ENCODE measurements at regions of chr11 and their contacts with region 1.

Region 1: DNA sequence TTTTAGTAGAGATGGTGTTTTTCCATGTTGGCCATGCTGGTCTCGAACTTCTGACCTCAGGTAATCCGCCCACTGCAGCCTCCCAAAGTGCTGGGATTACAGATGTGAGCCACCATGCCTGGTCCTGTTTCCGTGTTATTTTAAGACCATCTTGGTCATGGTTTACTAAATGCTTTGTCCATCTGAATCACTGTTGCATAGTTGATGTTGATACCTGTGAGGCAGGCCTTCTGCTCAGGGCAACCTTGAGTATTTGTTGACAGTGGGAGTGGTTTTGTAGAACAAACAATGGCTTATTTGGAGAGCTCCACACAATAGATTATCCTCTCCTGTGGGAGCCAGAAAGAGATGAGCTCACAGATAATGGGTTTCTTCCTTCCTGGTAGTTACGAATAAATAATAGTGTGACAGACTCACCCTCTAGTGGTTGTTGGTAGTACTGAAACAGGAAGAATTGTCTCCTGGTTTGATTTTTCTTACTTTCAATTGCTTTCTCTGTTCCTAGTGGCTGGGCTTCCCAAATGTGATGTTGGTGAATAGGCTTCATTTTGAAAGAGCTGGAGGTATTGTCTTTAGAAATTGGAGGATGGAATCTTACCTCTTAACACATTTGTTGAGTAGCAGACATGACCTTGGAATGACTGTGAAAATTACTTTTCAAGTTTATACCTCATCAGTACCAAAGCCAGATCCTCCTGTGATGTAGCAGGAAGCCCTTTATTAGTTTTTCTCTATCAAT is 39.0 kb downstream of the CTNND1 start:
- DNase-seq: no peak
- H3K4me3 ChIP-seq: peak overlapping the region in 8 of 59 donors; percentile 1 to 30 (median 13)
- H3K27ac ChIP-seq: peak overlapping the region in 58 of 59 donors; percentile 3 to 91 (median 78)
- H3K27me3 ChIP-seq: no peaks in the 10 kb centered on the region
- CTCF ChIP-seq: peak; percentile 81 to 99 (median 94)

Region 2: GRCh38 chr11:57456960-57457642 is 343.5 kb before region 1 on chr11:
- intact Hi-C with region 1: loop called in 1 of 2 experiments (anchors 10 kb)
- DNase-seq: peak; percentile 82 to 93 (median 90)
- H3K4me3 ChIP-seq: peak overlapping the region in 13 of 59 donors; percentile 7 to 69 (median 21)
- H3K27ac ChIP-seq: no peak overlapping the region
- H3K27me3 ChIP-seq: peaks cover 0 to 43% (median 13%) of the 10 kb centered on the region in 45 donors
- CTCF ChIP-seq: peak; percentile 90 to 99 (median 98)

Region 3: DNA sequence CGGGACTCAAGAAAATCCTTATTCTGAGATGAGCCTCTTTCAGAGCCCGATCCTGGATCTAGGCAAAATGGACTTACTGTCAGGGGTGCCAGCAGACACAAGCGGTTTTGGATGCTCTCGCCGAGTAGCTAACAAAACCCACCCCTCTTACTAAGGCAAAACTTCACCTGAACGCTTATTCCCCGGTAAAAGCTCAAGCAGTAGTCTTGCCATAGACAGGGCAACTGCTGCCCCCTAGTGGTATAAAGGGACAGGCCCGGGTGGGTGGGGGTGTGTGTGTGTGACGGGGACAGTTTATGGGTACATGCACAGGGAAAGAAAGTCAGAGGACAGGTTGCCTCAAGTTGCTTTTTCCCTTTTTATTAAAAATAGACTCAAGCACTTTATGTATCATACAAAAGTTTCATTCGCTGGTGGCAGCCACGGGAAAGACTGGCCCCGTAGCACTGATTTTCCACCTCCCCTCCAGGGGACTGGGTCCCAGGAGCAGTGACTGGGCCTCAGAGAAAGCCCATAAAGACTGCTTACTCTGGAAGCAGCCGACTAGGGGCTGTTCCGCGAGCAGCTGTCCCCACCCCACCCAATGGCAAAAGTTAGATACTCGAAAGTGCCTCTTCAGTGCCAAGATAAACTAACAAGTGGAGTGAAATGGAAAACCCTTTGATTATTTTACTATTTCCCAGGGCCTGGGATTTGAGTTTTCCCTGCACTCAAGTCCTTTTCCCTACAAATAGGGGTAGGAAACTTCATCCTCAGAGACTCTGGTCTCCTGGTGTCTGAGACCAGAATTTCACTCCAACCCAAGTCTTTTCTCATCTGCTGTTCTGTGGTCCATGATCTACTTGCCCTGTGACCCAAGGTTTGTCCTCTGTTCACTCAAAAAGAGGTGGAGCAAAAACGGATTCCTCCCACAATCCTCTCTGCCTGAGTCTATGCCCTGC is 155.6 kb before region 1 on chr11:
- intact Hi-C with region 1: loop called in 1 of 2 experiments (anchors 5 kb)
- DNase-seq: peak; percentile 67 to 91 (median 84)
- H3K4me3 ChIP-seq: peak overlapping the region in 9 of 59 donors; percentile 7 to 31 (median 13)
- H3K27ac ChIP-seq: peak overlapping the region in 38 of 59 donors; percentile 1 to 95 (median 50)
- H3K27me3 ChIP-seq: peaks cover 0 to 6% (median 0%) of the 10 kb centered on the region in 45 donors
- CTCF ChIP-seq: peak; percentile 65 to 94 (median 84)

Region 4: GRCh38 chr11:57712256-57713150 is 88.1 kb before region 1 on chr11 and contains the start of gene TMX2:
- intact Hi-C with region 1: loop called (anchors 2 kb)
- DNase-seq: peak; percentile 85 to 97 (median 94)
- H3K4me3 ChIP-seq: peak within 1 kb of the TSS; percentile 75 to 100 (median 98)
- H3K27ac ChIP-seq: peak within 1 kb of the TSS; percentile 51 to 96 (median 88)
- H3K27me3 ChIP-seq: no peaks in the 10 kb centered on the region
- CTCF ChIP-seq: peak in 15 of 56 donors; percentile 2 to 46 (median 13)
- total RNA-seq, gene TMX2: 68.4 to 114 (median 91.6) TPM

Region 5: GRCh38 chr11:57761301-57762234 is 39.0 kb before region 1 on chr11 and contains the start of gene CTNND1:
- intact Hi-C with region 1: loop called (anchors 5 kb)
- DNase-seq: peak; percentile 43 to 90 (median 80)
- H3K4me3 ChIP-seq: peak within 1 kb of the TSS; percentile 49 to 93 (median 77)
- H3K27ac ChIP-seq: peak within 1 kb of the TSS; percentile 58 to 97 (median 91)
- H3K27me3 ChIP-seq: no peaks in the 10 kb centered on the region
- CTCF ChIP-seq: peak in 14 of 56 donors; percentile 2 to 37 (median 16)
- total RNA-seq, gene CTNND1: 92.0 to 159 (median 119) TPM

Region 6: GRCh38 chr11:57913715-57914704 is 113.4 kb after region 1 on chr11:
- intact Hi-C with region 1: no loop called
- DNase-seq: no peak
- H3K4me3 ChIP-seq: no peak overlapping the region
- H3K27ac ChIP-seq: no peak overlapping the region
- H3K27me3 ChIP-seq: no peaks in the 10 kb centered on the region
- CTCF ChIP-seq: no peak

Region 7: DNA sequence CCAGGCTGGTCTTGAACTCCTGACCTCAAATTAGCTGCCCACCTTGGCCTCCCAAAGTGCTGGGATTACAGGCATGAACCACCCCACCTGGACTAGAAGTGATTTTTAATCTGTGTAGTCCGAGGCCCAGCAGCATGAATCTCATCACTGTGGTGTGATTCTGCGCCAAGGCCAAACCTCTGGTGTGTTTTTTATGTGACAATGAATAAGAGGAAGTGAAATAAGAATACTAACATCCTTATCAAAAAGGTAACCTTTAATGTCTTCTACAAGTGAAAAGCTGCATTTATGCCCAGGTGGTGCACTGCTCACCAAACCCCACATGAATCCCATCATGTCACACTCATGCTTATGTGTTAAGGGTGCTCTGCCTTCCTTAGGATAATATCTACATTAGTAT is 146.0 kb after region 1 on chr11:
- intact Hi-C with region 1: no loop called
- DNase-seq: no peak
- H3K4me3 ChIP-seq: no peak overlapping the region
- H3K27ac ChIP-seq: no peak overlapping the region
- H3K27me3 ChIP-seq: no peaks in the 10 kb centered on the region
- CTCF ChIP-seq: no peak

Region 8: DNA sequence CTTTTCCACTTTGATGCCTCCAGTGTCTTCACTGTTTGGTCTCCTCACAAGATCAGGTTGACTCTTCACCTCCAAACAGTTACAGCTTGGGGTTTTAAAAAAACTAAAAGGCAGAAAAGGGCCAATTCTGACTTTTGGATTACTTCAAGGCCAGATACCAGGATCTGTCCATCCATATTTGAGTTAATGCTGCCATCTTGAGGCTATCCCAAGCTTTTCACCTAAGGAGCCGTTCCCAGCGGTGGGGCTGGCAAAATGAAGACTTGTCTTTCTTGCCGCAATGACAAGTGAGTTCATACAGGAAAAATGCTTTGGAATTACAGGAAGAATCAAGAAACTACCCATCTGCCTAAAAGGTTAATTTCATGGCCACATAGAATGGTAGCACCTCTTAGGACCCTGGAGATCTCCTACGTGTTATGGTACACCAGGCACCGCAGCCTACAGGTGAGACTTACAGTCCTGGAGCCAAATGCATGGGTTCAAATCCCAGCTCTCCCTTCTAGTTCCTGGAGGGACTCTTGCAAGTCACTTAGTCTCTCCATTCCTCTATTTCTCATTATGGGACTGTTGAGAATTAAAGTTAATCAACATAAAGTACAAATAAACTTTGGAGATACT is 713.2 kb after region 1 on chr11:
- intact Hi-C with region 1: loop called in 1 of 2 experiments (anchors 10 kb)
- DNase-seq: peak in 5 of 10 donors; percentile 32 to 55 (median 42)
- H3K4me3 ChIP-seq: peak overlapping the region in 1 of 59 donors; percentile 21
- H3K27ac ChIP-seq: peak overlapping the region in 2 of 59 donors; percentile 38 to 40
- H3K27me3 ChIP-seq: no peaks in the 10 kb centered on the region
- CTCF ChIP-seq: peak; percentile 50 to 83 (median 70)